CD4-positive, alpha-beta T cell (primary cell): ENCODE measurements at regions of chr9 and their contacts with region 1.

Region 1: DNA sequence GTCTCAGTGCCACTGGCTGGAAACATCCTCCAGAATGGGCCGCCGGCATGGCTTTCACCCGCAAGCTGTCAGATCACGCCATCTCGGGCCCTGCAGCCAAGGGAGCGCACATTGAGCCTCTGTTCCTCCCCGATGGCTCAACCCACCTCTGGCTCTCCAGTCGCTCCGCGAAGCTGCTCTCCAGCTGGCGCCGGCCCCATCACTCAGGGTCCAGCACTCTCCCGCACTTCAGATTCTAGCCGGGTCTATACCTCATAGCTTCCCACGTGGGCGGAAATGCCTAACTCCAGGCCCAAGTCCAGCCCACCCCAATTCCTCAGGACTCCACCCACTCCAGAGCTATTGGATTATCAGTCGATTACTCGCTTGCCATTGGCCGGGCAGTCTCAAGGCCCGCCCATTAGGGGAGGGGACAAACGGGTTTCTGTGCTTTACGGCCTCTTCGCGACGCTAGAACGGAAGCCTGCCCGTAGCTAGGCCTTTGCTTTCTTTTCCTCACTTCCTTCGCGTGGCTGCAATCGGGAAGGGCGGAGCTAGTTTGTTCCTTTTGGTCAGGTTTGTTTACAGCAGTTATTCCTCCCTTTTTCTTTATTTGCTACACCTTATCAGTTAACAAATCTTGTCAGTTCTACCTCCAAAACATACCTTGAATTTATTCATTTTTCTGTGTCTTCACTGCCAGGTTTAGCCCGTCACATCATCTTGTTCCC is at the start of gene NOL6:
- DNase-seq: peak; percentile 96 to 99 (median 97)
- ATAC-seq: peak; percentile 99
- H3K4me3 ChIP-seq: peak within 1 kb of the TSS; percentile 92
- H3K4me3 Mint-ChIP-seq: peak within 1 kb of the TSS; percentile 99
- H3K27ac ChIP-seq: peak within 1 kb of the TSS; percentile 58 to 64
- H3K27ac Mint-ChIP-seq: peak within 1 kb of the TSS; percentile 89
- H3K4me1 ChIP-seq: peaks cover 25% of the 10 kb centered on the region
- H3K4me1 Mint-ChIP-seq: peaks cover 33% of the 10 kb centered on the region
- H3K27me3 ChIP-seq: no peaks in the 10 kb centered on the region
- H3K27me3 Mint-ChIP-seq: no peaks in the 10 kb centered on the region
- CTCF ChIP-seq: no peak
- total RNA-seq, gene NOL6: 30.5 to 30.6 TPM

Region 2: GRCh38 chr9:33024966-33025571 is 448.7 kb before region 1 on chr9 and contains the start of gene DNAJA1:
- CTCF ChIA-PET with region 1: no interaction called
- POLR2A ChIA-PET with region 1: interaction called, 9 read pairs
- intact Hi-C with region 1: loop called in 1 of 2 experiments (anchors 10 kb)
- DNase-seq: peak; percentile 90 to 98 (median 96)
- ATAC-seq: peak; percentile 83
- H3K4me3 ChIP-seq: peak within 1 kb of the TSS; percentile 90
- H3K4me3 Mint-ChIP-seq: peak within 1 kb of the TSS; percentile 96
- H3K27ac ChIP-seq: peak within 1 kb of the TSS; percentile 99 to 100
- H3K27ac Mint-ChIP-seq: peak within 1 kb of the TSS; percentile 93
- H3K4me1 ChIP-seq: peaks cover 43% of the 10 kb centered on the region
- H3K4me1 Mint-ChIP-seq: peaks cover 73% of the 10 kb centered on the region
- H3K27me3 ChIP-seq: no peaks in the 10 kb centered on the region
- H3K27me3 Mint-ChIP-seq: no peaks in the 10 kb centered on the region
- CTCF ChIP-seq: no peak
- total RNA-seq, gene DNAJA1: 150 to 156 TPM

Region 3: GRCh38 chr9:33404788-33405362 is 68.9 kb before region 1 on chr9:
- CTCF ChIA-PET with region 1: interaction called, 4 read pairs
- POLR2A ChIA-PET with region 1: interaction called, 7 read pairs
- intact Hi-C with region 1: loop called in 1 of 2 experiments (anchors 2 kb)
- DNase-seq: peak in 1 of 14 experiments; percentile 11
- ATAC-seq: no peak
- H3K4me3 ChIP-seq: no peak overlapping the region
- H3K4me3 Mint-ChIP-seq: no peak overlapping the region
- H3K27ac ChIP-seq: no peak overlapping the region
- H3K27ac Mint-ChIP-seq: peak overlapping the region; percentile 45
- H3K4me1 ChIP-seq: peaks cover 14% of the 10 kb centered on the region
- H3K4me1 Mint-ChIP-seq: peaks cover 6% of the 10 kb centered on the region
- H3K27me3 ChIP-seq: no peaks in the 10 kb centered on the region
- H3K27me3 Mint-ChIP-seq: no peaks in the 10 kb centered on the region
- CTCF ChIP-seq: no peak

Region 4: DNA sequence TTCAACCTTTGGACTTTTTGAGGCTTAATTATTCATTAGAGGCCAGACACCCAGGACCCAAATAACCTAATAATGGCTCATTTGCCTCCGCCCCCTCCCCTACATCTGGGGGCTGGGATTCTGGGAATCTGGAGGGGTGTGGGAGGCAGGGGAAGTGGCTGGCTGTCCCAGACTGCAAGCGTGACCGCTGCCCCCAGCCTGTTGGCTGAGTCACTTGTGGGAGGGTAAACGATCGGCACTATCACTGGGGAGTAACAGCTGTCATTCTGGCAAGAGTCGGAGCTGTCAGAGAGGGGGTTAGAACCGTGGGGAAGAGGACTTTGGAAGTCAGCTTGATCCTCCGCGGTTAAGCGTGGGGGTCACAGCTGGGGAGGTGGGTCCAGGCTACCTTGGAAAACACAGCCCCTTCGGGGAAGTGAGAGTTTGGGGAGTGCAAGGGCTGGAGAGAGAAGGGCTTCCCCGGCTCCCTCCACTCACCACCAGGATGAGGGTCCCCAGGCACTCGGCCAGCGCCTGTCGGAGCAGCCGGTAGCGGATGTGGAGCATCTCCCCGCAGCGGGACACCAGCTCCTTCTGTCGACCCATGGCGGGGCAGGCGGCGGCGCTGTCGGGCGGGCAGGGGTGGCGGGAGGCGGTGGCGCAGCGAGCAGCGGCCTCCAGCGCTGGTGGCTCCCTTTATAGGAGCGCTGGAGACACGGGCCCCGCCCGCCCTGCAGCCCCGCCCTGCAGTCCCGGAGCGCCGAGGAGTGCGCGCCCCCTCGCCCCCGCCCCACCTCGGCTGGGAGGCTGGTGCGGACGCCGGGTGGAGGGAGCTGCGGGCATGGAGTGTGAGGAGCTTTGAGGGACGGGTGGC is 26.6 kb before region 1 on chr9 and contains the start of gene AQP3:
- CTCF ChIA-PET with region 1: interaction called, 5 read pairs
- POLR2A ChIA-PET with region 1: interaction called, 52 read pairs
- intact Hi-C with region 1: no loop called
- DNase-seq: peak; percentile 63 to 89 (median 75)
- ATAC-seq: peak; percentile 51
- H3K4me3 ChIP-seq: peak within 1 kb of the TSS; percentile 90
- H3K4me3 Mint-ChIP-seq: peak within 1 kb of the TSS; percentile 97
- H3K27ac ChIP-seq: peak within 1 kb of the TSS; percentile 83 to 91
- H3K27ac Mint-ChIP-seq: peak within 1 kb of the TSS; percentile 99
- H3K4me1 ChIP-seq: peaks cover 69% of the 10 kb centered on the region
- H3K4me1 Mint-ChIP-seq: peaks cover 52% of the 10 kb centered on the region
- H3K27me3 ChIP-seq: no peaks in the 10 kb centered on the region
- H3K27me3 Mint-ChIP-seq: no peaks in the 10 kb centered on the region
- CTCF ChIP-seq: peak; percentile 53
- total RNA-seq, gene AQP3: 99.8 to 106 TPM

Region 5: GRCh38 chr9:33458444-33458843 is 15.4 kb before region 1 on chr9:
- CTCF ChIA-PET with region 1: no interaction called
- POLR2A ChIA-PET with region 1: interaction called, 67 read pairs
- intact Hi-C with region 1: no loop called
- DNase-seq: peak in 13 of 14 experiments; percentile 47 to 87 (median 66)
- ATAC-seq: peak; percentile 81
- H3K4me3 ChIP-seq: no peak overlapping the region
- H3K4me3 Mint-ChIP-seq: peak overlapping the region; percentile 81
- H3K27ac ChIP-seq: peak overlapping the region; percentile 75 to 80
- H3K27ac Mint-ChIP-seq: peak overlapping the region; percentile 91
- H3K4me1 ChIP-seq: peaks cover 67% of the 10 kb centered on the region
- H3K4me1 Mint-ChIP-seq: peaks cover 48% of the 10 kb centered on the region
- H3K27me3 ChIP-seq: no peaks in the 10 kb centered on the region
- H3K27me3 Mint-ChIP-seq: no peaks in the 10 kb centered on the region
- CTCF ChIP-seq: no peak

Region 6: DNA sequence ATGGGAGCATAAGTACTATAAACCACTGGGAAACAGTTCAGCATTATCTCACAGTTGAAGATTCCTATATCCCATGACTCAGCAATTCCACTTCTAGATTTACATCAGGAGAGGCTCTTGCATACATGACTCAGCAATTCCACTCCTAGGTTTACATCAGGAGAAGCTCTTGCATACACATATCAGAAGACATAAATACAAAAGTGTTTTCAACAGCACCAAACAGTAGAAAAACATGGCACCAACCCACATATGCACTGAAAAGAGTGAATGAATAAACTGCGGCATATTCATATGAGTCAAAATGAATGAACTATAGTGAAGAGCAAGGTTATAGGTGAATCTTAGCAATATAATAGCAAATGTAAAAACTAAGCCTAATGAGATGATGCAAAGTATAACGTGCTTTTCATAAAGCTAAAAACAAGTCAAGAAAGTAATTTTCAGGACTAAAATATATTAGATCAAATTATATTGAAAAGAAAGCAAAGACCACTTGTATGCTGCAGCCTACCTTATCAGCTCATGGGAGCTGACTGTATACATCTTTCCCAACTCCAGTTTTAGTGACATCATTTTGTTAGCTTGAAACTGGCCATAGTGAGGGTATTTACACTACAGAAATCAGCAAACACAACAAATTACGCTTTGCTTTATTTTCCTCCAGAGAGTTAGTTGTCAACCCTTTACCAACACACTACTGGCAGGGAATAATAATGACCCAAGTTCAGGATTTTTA is 146.0 kb after region 1 on chr9:
- CTCF ChIA-PET with region 1: no interaction called
- POLR2A ChIA-PET with region 1: no interaction called
- intact Hi-C with region 1: no loop called
- DNase-seq: no peak
- ATAC-seq: no peak
- H3K4me3 ChIP-seq: no peak overlapping the region
- H3K4me3 Mint-ChIP-seq: no peak overlapping the region
- H3K27ac ChIP-seq: no peak overlapping the region
- H3K27ac Mint-ChIP-seq: no peak overlapping the region
- H3K4me1 ChIP-seq: peaks cover 5% of the 10 kb centered on the region
- H3K4me1 Mint-ChIP-seq: no peaks in the 10 kb centered on the region
- H3K27me3 ChIP-seq: peaks cover 0 to 3% of the 10 kb centered on the region in 2 experiments
- H3K27me3 Mint-ChIP-seq: peaks cover 50% of the 10 kb centered on the region
- CTCF ChIP-seq: no peak

Region 7: DNA sequence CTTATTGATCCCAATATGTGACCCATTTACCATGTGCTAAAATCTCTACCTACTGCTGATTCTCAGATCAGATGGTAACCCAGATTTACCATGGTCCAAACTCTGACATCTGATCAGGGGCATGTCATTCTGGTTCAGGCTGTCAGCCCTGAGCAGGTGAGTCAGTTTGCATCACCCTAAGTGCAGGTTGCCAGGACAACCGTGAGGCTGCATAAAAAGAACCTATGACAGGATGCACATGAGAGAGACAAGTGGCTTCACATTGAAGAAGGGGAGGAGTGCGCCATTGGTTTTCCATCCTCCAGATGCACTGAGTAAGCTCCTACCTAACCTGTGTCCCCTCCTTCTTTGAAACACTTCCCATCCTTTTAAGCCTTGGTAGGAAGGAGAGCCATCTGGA is 320.8 kb after region 1 on chr9:
- CTCF ChIA-PET with region 1: no interaction called
- POLR2A ChIA-PET with region 1: no interaction called
- intact Hi-C with region 1: no loop called
- DNase-seq: no peak
- ATAC-seq: peak; percentile 39
- H3K4me3 ChIP-seq: no peak overlapping the region
- H3K4me3 Mint-ChIP-seq: no peak overlapping the region
- H3K27ac ChIP-seq: no peak overlapping the region
- H3K27ac Mint-ChIP-seq: no peak overlapping the region
- H3K4me1 ChIP-seq: no peaks in the 10 kb centered on the region
- H3K4me1 Mint-ChIP-seq: no peaks in the 10 kb centered on the region
- H3K27me3 ChIP-seq: peaks cover 7% of the 10 kb centered on the region in 2 experiments
- H3K27me3 Mint-ChIP-seq: peaks cover 23% of the 10 kb centered on the region
- CTCF ChIP-seq: no peak